ENCODE measurements at regions of chr17 and their contacts with region 1.

Region 1: GRCh38 chr17:72120642-72121163 is at the start of gene SOX9:
- DNase-seq: peak; percentile 93 to 96
- H3K4me3 ChIP-seq: peak within 1 kb of the TSS; percentile 71
- H3K4me3 Mint-ChIP-seq: peak within 1 kb of the TSS; percentile 84
- H3K27ac Mint-ChIP-seq: peak within 1 kb of the TSS; percentile 86
- H3K4me1 ChIP-seq: peaks cover 25% of the 10 kb centered on the region
- H3K4me1 Mint-ChIP-seq: peaks cover 12% of the 10 kb centered on the region
- H3K27me3 ChIP-seq: no peaks in the 10 kb centered on the region
- H3K27me3 Mint-ChIP-seq: no peaks in the 10 kb centered on the region
- CTCF ChIP-seq: no peak
- total RNA-seq, gene SOX9: 46.2 and 51.5 TPM in 2 replicates

Region 2: DNA sequence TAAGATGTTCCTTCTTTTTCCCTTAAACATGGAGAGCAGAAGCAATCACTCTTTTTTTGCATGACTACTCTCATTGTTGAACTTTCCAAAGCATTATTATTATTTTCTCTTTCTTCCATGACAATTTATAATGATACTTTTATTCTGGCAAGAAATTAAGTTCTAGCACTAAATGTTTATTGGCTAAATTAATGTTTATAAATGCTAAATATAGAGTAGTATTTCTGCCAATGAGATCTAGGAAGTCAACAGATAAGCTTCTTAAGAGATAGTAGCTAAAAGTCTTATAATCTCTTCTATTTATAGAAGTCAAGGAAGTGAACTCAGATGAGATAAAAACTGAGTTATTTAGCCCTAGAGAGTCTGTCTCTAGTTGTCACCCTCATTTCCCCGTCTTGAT is 1031.3 kb before region 1 on chr17:
- CTCF ChIA-PET with region 1: no interaction called
- POLR2A ChIA-PET with region 1: no interaction called
- intact Hi-C with region 1: no loop called
- DNase-seq: no peak
- H3K4me3 ChIP-seq: no peak overlapping the region
- H3K4me3 Mint-ChIP-seq: no peak overlapping the region
- H3K27ac Mint-ChIP-seq: no peak overlapping the region
- H3K4me1 ChIP-seq: no peaks in the 10 kb centered on the region
- H3K4me1 Mint-ChIP-seq: no peaks in the 10 kb centered on the region
- H3K27me3 ChIP-seq: no peaks in the 10 kb centered on the region
- H3K27me3 Mint-ChIP-seq: no peaks in the 10 kb centered on the region
- CTCF ChIP-seq: no peak

Region 3: GRCh38 chr17:71472809-71473789 is 647.6 kb before region 1 on chr17:
- CTCF ChIA-PET with region 1: interaction called, 9 read pairs
- POLR2A ChIA-PET with region 1: no interaction called
- intact Hi-C with region 1: loop called (anchors 1 kb)
- DNase-seq: peak; percentile 43 to 57
- H3K4me3 ChIP-seq: no peak overlapping the region
- H3K4me3 Mint-ChIP-seq: no peak overlapping the region
- H3K27ac Mint-ChIP-seq: no peak overlapping the region
- H3K4me1 ChIP-seq: no peaks in the 10 kb centered on the region
- H3K4me1 Mint-ChIP-seq: no peaks in the 10 kb centered on the region
- H3K27me3 ChIP-seq: no peaks in the 10 kb centered on the region
- H3K27me3 Mint-ChIP-seq: peaks cover 9% of the 10 kb centered on the region
- CTCF ChIP-seq: peak; percentile 66 to 83

Region 4: DNA sequence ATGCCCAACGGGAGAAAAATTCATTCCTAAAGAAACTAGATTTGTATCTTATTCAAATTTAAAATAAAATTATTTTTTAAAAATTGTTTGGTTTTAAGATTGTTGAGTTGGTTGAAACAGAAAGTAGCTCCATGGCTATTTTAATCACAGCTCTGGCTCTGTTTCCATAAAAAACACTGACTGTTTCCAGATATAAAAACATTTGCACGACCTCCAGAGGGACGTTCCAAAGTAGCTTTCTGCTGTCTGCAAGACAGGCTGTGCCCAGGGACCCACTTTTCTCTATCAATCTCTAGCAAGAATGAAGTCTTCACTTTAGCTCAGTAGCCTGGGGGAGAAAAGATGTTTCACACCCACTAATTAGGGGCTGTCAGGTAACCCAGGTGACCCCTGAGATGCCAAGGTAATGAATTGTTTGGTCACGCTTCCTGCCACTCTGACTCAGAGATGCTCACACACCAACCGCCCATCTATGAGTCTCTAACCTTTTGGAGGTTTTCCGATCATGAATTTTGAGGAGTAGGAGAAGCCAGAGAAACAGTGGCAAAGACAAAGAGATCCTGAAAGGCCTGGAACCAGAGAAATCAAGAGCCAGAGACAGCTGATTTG is 220.0 kb before region 1 on chr17:
- CTCF ChIA-PET with region 1: no interaction called
- POLR2A ChIA-PET with region 1: no interaction called
- intact Hi-C with region 1: no loop called
- DNase-seq: no peak
- H3K4me3 ChIP-seq: no peak overlapping the region
- H3K4me3 Mint-ChIP-seq: no peak overlapping the region
- H3K27ac Mint-ChIP-seq: no peak overlapping the region
- H3K4me1 ChIP-seq: no peaks in the 10 kb centered on the region
- H3K4me1 Mint-ChIP-seq: no peaks in the 10 kb centered on the region
- H3K27me3 ChIP-seq: no peaks in the 10 kb centered on the region
- H3K27me3 Mint-ChIP-seq: no peaks in the 10 kb centered on the region
- CTCF ChIP-seq: no peak

Region 5: GRCh38 chr17:71959154-71959553 is 161.5 kb before region 1 on chr17:
- CTCF ChIA-PET with region 1: no interaction called
- POLR2A ChIA-PET with region 1: no interaction called
- intact Hi-C with region 1: loop called (anchors 5 kb)
- DNase-seq: peak in 1 of 2 experiments; percentile 13
- H3K4me3 ChIP-seq: no peak overlapping the region
- H3K4me3 Mint-ChIP-seq: no peak overlapping the region
- H3K27ac Mint-ChIP-seq: no peak overlapping the region
- H3K4me1 ChIP-seq: no peaks in the 10 kb centered on the region
- H3K4me1 Mint-ChIP-seq: no peaks in the 10 kb centered on the region
- H3K27me3 ChIP-seq: no peaks in the 10 kb centered on the region
- H3K27me3 Mint-ChIP-seq: peaks cover 4% of the 10 kb centered on the region
- CTCF ChIP-seq: peak; percentile 41 to 49

Region 6: GRCh38 chr17:72397687-72398086 is 277.0 kb after region 1 on chr17:
- CTCF ChIA-PET with region 1: no interaction called
- POLR2A ChIA-PET with region 1: interaction called, 3 read pairs
- intact Hi-C with region 1: loop called (anchors 2 kb)
- DNase-seq: no peak
- H3K4me3 ChIP-seq: no peak overlapping the region
- H3K4me3 Mint-ChIP-seq: peak overlapping the region; percentile 4
- H3K27ac Mint-ChIP-seq: peak overlapping the region; percentile 40
- H3K4me1 ChIP-seq: peaks cover 38% of the 10 kb centered on the region
- H3K4me1 Mint-ChIP-seq: peaks cover 27% of the 10 kb centered on the region
- H3K27me3 ChIP-seq: no peaks in the 10 kb centered on the region
- H3K27me3 Mint-ChIP-seq: no peaks in the 10 kb centered on the region
- CTCF ChIP-seq: no peak

Region 7: GRCh38 chr17:72411124-72411563 is 290.4 kb after region 1 on chr17:
- CTCF ChIA-PET with region 1: no interaction called
- POLR2A ChIA-PET with region 1: interaction called, 10 read pairs
- intact Hi-C with region 1: loop called (anchors 5 kb)
- DNase-seq: no peak
- H3K4me3 ChIP-seq: no peak overlapping the region
- H3K4me3 Mint-ChIP-seq: no peak overlapping the region
- H3K27ac Mint-ChIP-seq: peak overlapping the region; percentile 77
- H3K4me1 ChIP-seq: peaks cover 79% of the 10 kb centered on the region
- H3K4me1 Mint-ChIP-seq: peaks cover 50% of the 10 kb centered on the region
- H3K27me3 ChIP-seq: no peaks in the 10 kb centered on the region
- H3K27me3 Mint-ChIP-seq: no peaks in the 10 kb centered on the region
- CTCF ChIP-seq: no peak

Region 8: GRCh38 chr17:72479113-72479512 is 358.4 kb after region 1 on chr17:
- CTCF ChIA-PET with region 1: no interaction called
- POLR2A ChIA-PET with region 1: interaction called, 3 read pairs
- intact Hi-C with region 1: loop called (anchors 1 kb)
- DNase-seq: peak in 1 of 2 experiments; percentile 49
- H3K4me3 ChIP-seq: no peak overlapping the region
- H3K4me3 Mint-ChIP-seq: no peak overlapping the region
- H3K27ac Mint-ChIP-seq: no peak overlapping the region
- H3K4me1 ChIP-seq: peaks cover 27% of the 10 kb centered on the region
- H3K4me1 Mint-ChIP-seq: peaks cover 8% of the 10 kb centered on the region
- H3K27me3 ChIP-seq: no peaks in the 10 kb centered on the region
- H3K27me3 Mint-ChIP-seq: no peaks in the 10 kb centered on the region
- CTCF ChIP-seq: peak; percentile 20 to 41

Region 9: DNA sequence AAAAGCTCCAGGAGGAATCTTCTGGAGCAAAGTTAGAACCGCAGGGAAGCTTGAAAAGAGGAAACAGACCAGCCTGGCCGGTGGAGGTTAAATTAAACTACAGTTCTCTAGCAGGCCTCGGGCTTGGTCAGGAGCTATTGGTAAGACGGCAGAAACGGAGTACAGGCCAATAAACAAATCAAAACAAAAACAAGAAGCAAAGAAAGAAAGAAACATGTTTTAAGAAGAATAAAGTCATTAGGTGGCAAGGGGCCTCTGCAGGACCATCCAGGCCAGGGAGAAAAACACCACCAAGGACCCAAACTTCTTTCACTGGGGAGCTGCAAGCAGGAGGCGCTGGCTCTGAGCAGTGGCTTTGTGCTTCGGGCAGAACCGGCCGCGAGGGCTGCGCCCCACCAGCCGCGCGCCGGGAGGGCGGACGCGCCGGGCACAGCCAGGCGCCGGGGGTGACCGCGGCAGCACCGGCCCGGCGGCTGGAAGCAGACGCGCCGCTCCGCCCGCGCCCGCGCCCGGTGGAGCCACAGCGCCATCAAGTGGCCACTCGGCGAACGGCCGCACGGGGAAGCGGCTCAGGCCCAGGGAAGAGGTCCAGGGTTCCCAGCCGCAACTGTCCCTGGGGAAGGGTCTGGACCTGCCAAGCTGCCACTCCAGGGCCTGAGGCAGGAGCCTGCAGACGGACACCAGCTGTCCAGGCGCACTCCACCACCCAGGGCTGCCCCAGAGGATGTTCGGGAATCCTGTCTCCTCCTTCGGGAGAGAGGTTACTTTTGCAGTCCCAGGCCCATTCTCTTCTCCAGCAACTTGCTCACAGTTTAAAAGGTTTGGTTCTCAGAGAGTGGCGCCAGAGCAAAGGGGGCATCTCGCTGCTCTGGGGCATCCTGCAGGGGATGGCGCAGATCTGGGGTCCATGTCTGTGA is 419.5 kb after region 1 on chr17:
- CTCF ChIA-PET with region 1: interaction called, 8 read pairs
- POLR2A ChIA-PET with region 1: no interaction called
- intact Hi-C with region 1: loop called (anchors 2 kb)
- DNase-seq: peak in 1 of 2 experiments; percentile 88
- H3K4me3 ChIP-seq: no peak overlapping the region
- H3K4me3 Mint-ChIP-seq: peak overlapping the region; percentile 41
- H3K27ac Mint-ChIP-seq: peak overlapping the region; percentile 53
- H3K4me1 ChIP-seq: peaks cover 5% of the 10 kb centered on the region; the same call in 1 of the 2 replicates
- H3K4me1 Mint-ChIP-seq: peaks cover 14% of the 10 kb centered on the region
- H3K27me3 ChIP-seq: no peaks in the 10 kb centered on the region
- H3K27me3 Mint-ChIP-seq: no peaks in the 10 kb centered on the region
- CTCF ChIP-seq: peak; percentile 76 to 92